ENCODE measurements at regions of chr7 and their contacts with region 1.

Region 1: GRCh38 chr7:69799048-69799697 is 200.9 kb downstream of the AUTS2 start:
- DNase-seq: no peak
- H3K4me3 ChIP-seq: no peak overlapping the region
- H3K27ac ChIP-seq: no peak overlapping the region
- H3K4me1 ChIP-seq: no peaks in the 10 kb centered on the region
- H3K27me3 ChIP-seq: no peaks in the 10 kb centered on the region
- CTCF ChIP-seq: no peak
- POLR2A ChIP-seq: no peak

Region 2: DNA sequence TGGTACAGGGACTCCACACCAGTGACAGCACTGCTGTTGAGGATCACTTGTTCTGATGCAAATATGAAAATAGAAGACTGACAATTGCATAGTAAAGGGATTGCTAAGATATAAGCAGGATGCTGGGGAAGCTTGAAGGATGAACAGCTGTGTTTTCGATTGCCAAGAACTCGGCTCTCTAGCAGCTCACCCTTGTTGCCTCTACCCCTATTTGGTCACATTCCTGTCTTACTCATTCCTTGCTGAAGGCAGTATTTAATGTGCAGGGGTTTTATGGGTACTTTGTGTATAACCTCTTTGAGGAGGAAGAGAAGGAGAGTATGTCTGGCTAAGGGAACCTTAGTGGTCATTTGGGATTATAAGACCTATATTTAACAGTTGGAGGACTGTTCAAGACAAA is 17.9 kb after region 1 on chr7:
- CTCF ChIA-PET with region 1: no interaction called
- POLR2A ChIA-PET with region 1: no interaction called
- dilution Hi-C with region 1: no loop called
- intact Hi-C with region 1: no loop called
- DNase-seq: no peak
- H3K4me3 ChIP-seq: no peak overlapping the region
- H3K27ac ChIP-seq: no peak overlapping the region
- H3K4me1 ChIP-seq: no peaks in the 10 kb centered on the region
- H3K27me3 ChIP-seq: no peaks in the 10 kb centered on the region
- CTCF ChIP-seq: no peak
- POLR2A ChIP-seq: no peak

Region 3: DNA sequence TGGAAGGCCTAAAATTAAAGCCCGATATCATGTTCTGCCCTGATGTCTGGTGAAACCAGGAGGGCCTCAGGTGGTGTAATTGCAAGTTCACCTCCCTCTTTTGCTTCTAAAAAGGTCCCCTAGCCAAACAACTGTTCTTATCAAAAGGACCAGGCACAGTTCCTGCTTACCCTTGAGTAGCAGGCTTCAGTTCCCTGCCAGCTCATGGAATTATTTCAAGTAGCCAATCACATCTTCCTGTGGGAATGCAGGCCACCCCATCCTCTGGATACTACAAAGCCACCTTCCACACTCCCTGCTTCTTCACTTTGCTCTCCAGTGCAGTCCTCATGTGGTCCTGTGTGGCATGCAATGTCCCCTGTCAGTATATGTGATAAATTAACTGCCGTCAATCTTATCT is 1235.1 kb after region 1 on chr7:
- CTCF ChIA-PET with region 1: no interaction called
- POLR2A ChIA-PET with region 1: no interaction called
- dilution Hi-C with region 1: no loop called
- intact Hi-C with region 1: loop called (anchors 5 kb)
- DNase-seq: no peak
- H3K4me3 ChIP-seq: no peak overlapping the region
- H3K27ac ChIP-seq: no peak overlapping the region
- H3K4me1 ChIP-seq: no peaks in the 10 kb centered on the region
- H3K27me3 ChIP-seq: no peaks in the 10 kb centered on the region
- CTCF ChIP-seq: no peak
- POLR2A ChIP-seq: no peak